Panc1 (cell line): ENCODE measurements at regions of chr7 and their contacts with region 1.

Region 1: GRCh38 chr7:92754919-92755581 is 81.3 kb downstream of the CDK6 start:
- DNase-seq: no peak
- ATAC-seq: no peak
- H3K4me3 ChIP-seq: no peak overlapping the region
- H3K27ac ChIP-seq: peak overlapping the region; percentile 60
- H3K4me1 ChIP-seq: peaks cover 47% of the 10 kb centered on the region
- H3K27me3 ChIP-seq: no peaks in the 10 kb centered on the region
- CTCF ChIP-seq: no peak

Region 2: DNA sequence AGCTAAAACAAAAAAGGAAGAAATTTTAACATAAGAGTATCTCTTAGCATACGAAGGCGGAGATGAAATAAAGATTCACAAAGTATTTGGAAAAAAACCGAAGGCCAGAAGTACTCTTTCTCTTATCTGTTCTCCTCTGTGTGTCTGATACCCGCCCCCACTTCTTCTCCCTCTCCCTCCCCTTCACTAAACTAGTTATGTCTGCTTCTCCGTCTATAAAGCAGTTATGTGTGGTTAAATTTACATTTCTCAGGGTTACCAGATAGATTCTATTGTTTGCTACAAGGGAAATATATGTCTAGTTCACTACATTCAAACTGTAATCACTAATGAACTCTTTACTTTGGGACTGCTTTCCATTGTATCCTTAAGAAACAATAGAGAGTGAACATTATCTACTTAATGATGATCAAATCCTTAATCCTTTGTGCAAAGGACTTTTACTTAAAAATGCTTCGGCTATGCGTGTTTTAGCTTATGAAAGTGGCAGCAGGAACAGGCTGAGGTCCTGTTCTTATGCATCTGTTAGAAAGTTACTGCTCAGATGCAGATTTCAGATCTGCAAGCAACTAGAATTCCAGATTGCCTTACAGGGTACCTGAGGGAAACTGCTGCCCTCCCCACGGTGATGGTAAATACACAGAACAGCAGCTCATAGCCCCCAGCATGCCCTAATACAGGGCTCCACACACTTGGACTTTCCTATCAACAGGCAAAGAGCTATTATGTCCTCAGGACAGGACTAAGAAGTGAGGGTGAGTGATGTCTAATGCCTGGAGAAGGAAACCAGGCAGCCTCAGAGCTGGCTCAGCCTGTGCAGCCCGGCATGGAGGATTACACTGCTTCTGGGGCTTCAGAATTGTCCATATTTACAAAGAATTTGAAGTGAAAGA is 1217.5 kb before region 1 on chr7:
- CTCF ChIA-PET with region 1: no interaction called
- POLR2A ChIA-PET with region 1: no interaction called
- in situ Hi-C with region 1: no loop called
- intact Hi-C with region 1: no loop called
- DNase-seq: no peak
- ATAC-seq: no peak
- H3K4me3 ChIP-seq: no peak overlapping the region
- H3K27ac ChIP-seq: no peak overlapping the region
- H3K4me1 ChIP-seq: no peaks in the 10 kb centered on the region
- H3K27me3 ChIP-seq: no peaks in the 10 kb centered on the region
- CTCF ChIP-seq: no peak

Region 3: DNA sequence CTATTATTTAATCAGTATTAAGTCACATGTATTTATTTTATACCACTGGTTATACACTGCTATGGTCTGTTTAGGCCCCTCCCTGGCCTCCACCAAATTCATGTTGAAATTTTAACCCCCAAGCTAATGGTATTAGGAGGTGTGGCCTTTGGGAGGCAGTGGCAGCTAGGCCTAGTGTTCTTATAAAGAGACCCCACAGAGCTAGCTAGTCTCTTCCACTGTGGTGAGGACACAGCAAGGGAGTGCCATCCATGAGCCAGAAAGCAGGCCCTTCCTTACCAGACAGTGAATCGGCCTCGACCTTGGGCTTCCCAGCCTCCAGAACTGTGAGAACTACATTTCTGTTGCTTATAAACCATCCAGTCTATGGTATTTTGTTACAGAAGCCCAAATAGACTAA is 197.8 kb before region 1 on chr7:
- CTCF ChIA-PET with region 1: no interaction called
- POLR2A ChIA-PET with region 1: no interaction called
- in situ Hi-C with region 1: no loop called
- intact Hi-C with region 1: no loop called
- DNase-seq: no peak
- ATAC-seq: peak; percentile 37; the same call in 1 of the 2 replicates
- H3K4me3 ChIP-seq: no peak overlapping the region
- H3K27ac ChIP-seq: no peak overlapping the region
- H3K4me1 ChIP-seq: no peaks in the 10 kb centered on the region
- H3K27me3 ChIP-seq: no peaks in the 10 kb centered on the region
- CTCF ChIP-seq: no peak

Region 4: DNA sequence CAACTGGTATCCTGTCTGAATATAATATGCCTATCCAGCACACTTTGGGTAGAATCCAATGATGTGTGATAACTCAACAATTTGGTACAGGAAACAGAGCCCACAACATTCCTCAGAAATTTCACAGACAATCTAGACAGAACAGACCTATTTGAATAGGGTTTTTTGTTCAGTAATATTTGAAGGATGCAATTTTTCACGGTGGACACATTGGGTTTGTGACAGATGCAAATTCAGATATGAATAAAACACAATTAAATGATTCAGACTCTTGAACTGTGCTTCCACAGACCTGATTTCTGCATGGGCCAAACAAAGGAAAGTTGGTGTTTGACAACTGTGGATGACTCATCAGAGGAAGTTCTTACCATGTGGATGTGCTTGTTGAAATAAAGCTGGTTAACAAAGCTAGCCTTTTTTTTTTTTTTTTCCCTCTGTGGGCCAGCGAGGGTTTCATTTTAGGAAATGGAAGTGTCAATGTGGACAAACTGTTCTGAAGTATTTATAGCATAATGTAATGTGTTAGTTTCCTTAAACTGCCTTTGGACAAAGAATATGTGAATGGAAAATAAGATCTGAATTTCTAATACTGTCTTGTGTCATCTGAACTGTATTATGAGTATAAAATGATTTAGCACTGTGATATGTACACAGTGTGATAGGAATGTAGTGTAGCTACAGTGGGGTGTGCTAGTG is 121.7 kb before region 1 on chr7:
- CTCF ChIA-PET with region 1: no interaction called
- POLR2A ChIA-PET with region 1: interaction called, 11 read pairs
- in situ Hi-C with region 1: no loop called
- intact Hi-C with region 1: no loop called
- DNase-seq: peak; percentile 83
- ATAC-seq: peak; percentile 88
- H3K4me3 ChIP-seq: no peak overlapping the region
- H3K27ac ChIP-seq: peak overlapping the region; percentile 75
- H3K4me1 ChIP-seq: peaks cover 33% of the 10 kb centered on the region
- H3K27me3 ChIP-seq: no peaks in the 10 kb centered on the region
- CTCF ChIP-seq: no peak

Region 5: GRCh38 chr7:92988051-92988450 is 233.0 kb after region 1 on chr7:
- CTCF ChIA-PET with region 1: no interaction called
- POLR2A ChIA-PET with region 1: no interaction called
- in situ Hi-C with region 1: no loop called
- intact Hi-C with region 1: no loop called
- DNase-seq: no peak
- ATAC-seq: no peak
- H3K4me3 ChIP-seq: no peak overlapping the region
- H3K27ac ChIP-seq: no peak overlapping the region
- H3K4me1 ChIP-seq: no peaks in the 10 kb centered on the region
- H3K27me3 ChIP-seq: no peaks in the 10 kb centered on the region
- CTCF ChIP-seq: peak; percentile 11; the same call in 1 of the 2 replicates